Activated CD8-positive, alpha-beta T cell treated with anti-CD3 and anti-CD28 coated beads, Interleukin-2, amount 10 ng/mL, durations not matched to agents 7 days and 5 days (primary cell): ENCODE measurements at regions of chr13 and their contacts with region 1.

Region 1: GRCh38 chr13:98576963-98577822 is at the start of gene STK24:
- DNase-seq: peak; percentile 63
- ATAC-seq: peak; percentile 74
- H3K4me3 Mint-ChIP-seq: peak within 1 kb of the TSS; percentile 86
- H3K27ac Mint-ChIP-seq: peak within 1 kb of the TSS; percentile 88
- H3K4me1 Mint-ChIP-seq: peaks cover 43% of the 10 kb centered on the region
- H3K27me3 Mint-ChIP-seq: no peaks in the 10 kb centered on the region
- total RNA-seq, gene STK24: 140 to 151 TPM

Region 2: GRCh38 chr13:98563069-98563468 is 14.1 kb before region 1 on chr13:
- CTCF ChIA-PET with region 1: interaction called, 10 read pairs
- POLR2A ChIA-PET with region 1: interaction called, 20 read pairs
- DNase-seq: peak; percentile 71
- ATAC-seq: peak; percentile 73
- H3K4me3 Mint-ChIP-seq: peak overlapping the region; percentile 78
- H3K27ac Mint-ChIP-seq: peak overlapping the region; percentile 83
- H3K4me1 Mint-ChIP-seq: peaks cover 87% of the 10 kb centered on the region
- H3K27me3 Mint-ChIP-seq: no peaks in the 10 kb centered on the region

Region 3: DNA sequence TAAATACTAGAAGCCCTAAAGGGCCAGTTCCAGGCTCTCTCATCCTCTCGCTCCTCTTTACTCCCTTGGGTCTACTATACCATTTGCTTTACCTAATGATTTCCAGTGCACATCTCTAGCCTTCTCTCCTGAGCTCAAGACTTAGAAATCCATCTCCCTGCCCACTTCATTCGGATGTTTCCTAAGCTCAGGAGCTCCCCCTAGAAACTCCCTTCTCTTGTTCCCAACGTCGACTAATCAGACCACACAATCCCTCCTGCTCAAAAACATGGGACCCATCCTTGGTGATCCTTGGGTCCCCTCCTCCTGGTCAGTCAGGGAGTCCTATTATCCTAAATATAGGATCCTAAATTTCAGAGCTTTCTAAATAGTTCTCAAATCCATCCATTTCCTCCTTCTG is 20.9 kb after region 1 on chr13:
- CTCF ChIA-PET with region 1: no interaction called
- POLR2A ChIA-PET with region 1: no interaction called
- DNase-seq: no peak
- ATAC-seq: no peak
- H3K4me3 Mint-ChIP-seq: no peak overlapping the region
- H3K27ac Mint-ChIP-seq: no peak overlapping the region
- H3K4me1 Mint-ChIP-seq: peaks cover 9% of the 10 kb centered on the region
- H3K27me3 Mint-ChIP-seq: peaks cover 10% of the 10 kb centered on the region